Right ventricle myocardium superior (tissue), 1 donor: ENCODE measurements at regions of chr3 and their contacts with region 1.

Region 1: DNA sequence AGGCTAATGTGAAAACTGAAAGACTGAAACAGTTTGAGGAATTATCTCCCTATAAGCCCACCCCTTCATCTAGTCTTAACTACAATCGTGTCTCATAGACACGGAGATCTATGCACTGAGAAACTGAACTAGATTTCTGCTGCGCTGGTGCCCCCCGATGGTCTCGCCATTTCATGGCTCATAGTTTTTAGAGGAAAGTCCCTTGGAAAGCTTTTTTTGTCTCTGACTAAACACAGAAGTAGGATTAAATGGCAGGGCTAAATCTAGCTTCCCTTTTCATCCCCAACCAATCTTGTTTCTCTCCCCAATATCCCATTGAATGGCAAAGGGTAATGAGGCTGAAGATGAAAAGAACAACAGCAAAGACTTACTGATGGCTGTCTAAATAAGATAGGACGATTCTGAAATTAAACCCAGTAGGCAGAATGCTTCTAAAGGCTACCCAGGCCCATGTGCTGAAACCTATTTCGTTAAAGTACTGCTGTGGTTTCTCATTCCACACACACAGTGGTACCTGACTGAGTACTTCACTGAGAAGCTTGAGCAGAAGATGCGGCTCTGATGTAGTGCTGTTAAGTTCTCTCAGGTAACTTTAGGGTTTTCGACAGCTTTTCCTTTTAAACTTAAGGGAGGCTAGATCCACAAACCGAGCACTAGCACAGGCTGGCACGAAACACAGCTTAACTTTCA is 142.7 kb downstream of the GADL1 start:
- DNase-seq: peak; percentile 55
- ATAC-seq: peak; percentile 43

Region 2: DNA sequence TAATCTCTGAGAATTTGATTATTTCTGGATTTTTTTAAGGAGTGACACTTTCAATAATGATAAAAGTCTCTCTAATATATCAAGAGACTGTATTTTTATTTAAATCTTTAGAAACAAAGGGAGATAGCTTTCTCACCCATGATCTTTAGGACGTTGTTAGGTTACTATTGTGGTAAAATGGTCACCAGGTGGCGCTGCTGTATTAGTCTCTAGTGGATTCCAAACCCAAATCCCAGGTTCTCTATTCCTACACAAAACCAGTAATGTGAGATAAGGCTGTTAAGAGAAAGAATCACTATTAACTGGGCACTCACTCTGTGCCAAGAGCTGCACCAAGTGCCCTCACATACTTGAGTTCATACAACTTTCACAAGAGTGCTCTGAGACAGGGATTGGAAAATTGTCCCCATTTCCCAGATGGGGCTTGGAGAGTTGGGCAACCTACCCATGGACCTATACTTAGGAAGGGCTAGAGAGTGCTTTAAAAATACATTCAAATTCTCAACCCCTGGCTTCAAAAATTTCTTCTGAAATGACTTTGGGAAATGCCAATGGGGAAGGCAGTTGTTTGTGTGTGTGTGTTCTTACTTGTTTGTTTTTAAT is 738.7 kb before region 1 on chr3:
- intact Hi-C with region 1: loop called (anchors 10 kb)
- DNase-seq: peak; percentile 58
- ATAC-seq: peak; percentile 86

Region 3: DNA sequence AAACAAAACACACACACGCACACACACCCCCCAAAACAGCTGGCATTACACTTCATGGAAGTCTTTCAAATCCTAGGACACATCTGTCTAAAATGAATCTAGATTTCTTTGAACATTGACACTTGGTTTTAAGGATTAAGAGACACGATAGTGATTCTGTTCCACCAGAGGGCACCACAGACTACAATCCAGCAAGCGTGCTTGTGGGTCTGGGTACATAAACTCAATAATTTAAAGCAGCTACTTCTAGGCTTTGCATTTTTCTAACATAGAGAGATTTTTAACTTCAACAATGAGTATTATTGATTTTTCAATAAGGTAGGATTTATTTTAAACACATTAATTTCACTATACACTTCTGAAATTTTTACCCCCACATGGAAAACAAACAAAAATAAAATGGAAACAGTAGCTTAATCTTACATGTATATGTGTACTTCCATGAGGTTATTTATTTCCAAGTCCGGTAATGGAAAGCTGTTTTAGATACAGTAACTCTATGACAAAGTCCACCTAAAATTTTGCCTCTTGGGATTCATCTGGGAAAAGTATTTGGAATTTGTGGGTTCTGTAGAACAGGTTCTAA is 709.4 kb before region 1 on chr3:
- intact Hi-C with region 1: loop called (anchors 5 kb)
- DNase-seq: peak; percentile 47
- ATAC-seq: peak; percentile 88

Region 4: DNA sequence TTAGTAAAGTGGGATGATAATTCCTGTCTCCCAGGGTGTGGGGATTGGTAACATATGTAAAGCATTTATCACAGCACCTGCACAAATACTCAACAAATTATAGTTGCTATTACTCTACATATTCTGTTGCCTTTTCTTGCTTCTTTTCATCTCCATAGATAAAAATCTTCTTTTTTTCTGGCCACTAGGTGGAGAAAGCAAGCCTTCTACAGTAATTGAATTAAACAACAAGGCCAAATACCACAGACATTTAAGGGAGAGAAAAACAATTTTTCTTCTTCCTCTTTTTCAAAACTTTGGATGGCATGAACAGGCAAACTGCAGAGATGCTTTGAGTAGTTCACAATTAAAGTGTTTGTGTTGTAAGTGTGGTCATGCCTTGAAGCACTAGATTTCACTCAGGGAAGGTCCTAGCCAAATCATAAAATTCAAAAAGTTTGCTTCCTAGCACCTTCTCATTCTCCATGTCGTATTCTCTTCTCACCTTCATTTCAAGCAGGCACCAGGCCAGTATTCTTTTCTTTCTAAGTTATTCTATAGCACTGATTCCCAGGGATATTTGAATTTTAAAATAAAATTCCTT is 638.8 kb before region 1 on chr3:
- intact Hi-C with region 1: loop called (anchors 10 kb)
- DNase-seq: no peak
- ATAC-seq: peak; percentile 69

Region 5: DNA sequence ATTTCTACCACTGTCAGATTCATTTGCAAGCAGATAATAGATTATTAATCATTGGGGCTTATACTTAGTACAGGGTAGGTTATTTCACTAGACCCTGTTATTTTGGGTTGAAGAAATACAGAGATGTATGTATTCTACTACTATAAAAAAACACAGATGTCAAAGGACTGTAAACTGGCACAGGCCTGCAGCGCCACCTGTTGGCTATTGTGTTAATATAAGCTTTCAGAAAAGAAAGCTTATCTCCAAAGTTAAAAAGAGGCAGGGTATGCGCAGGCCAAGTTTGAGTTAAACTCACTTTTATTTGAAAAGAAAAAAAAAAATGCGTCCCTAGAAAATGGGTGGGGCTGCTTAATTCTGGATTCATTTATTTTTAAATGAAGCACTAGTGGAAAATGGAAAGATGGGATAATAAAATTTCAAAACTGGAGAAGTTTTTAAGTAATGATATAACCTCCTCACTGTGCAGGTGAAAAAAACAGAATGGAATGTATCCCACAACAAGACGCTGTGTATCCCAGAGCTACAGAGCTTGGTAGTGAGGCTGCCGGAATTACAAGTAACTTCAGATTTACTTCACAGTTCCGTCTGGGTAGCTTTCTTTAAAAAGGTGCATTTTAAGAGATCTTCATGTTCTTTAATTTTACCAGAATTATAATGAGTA is 552.5 kb before region 1 on chr3:
- intact Hi-C with region 1: loop called (anchors 10 kb)
- DNase-seq: peak; percentile 88
- ATAC-seq: peak; percentile 84

Region 6: GRCh38 chr3:32667122-32667521 is 1915.4 kb after region 1 on chr3:
- intact Hi-C with region 1: no loop called
- DNase-seq: no peak
- ATAC-seq: no peak